Activated CD4-positive, alpha-beta T cell treated with anti-CD3 and anti-CD28 coated beads, Interleukin-2, amount 10 ng/mL, durations not matched to agents 24 days and 14 days (primary cell): ENCODE measurements at regions of chr13 and their contacts with region 1.

Region 1: DNA sequence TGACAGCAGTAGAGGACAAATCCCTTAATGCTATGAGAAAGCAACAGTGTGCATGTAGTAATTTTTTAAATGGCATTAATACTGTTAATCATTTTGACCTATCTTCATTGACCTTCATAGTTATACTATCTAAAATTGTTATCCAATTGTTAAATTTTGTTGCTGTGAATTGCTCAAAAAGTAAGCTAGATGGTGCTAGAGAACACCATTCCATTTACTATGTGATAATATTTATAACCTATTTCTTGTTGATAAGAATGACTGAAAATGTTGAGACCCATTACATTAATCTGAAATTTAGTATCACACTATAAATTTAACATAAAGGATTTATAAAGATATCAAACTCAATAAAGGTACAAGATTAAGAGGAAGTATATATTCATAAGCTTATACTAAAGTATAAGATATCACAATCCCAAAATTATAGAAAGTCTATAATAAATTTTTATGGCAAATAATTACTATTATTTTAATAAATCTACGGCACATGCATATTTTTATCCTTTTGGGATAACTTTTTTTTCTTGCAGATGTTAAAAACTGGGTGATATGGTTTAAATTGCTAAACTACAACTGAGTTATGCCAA is 1573.3 kb downstream of the PCDH9 start:
- DNase-seq: no peak
- H3K4me3 Mint-ChIP-seq: no peak overlapping the region
- H3K27ac Mint-ChIP-seq: no peak overlapping the region
- H3K4me1 Mint-ChIP-seq: no peaks in the 10 kb centered on the region
- H3K27me3 Mint-ChIP-seq: no peaks in the 10 kb centered on the region

Region 2: GRCh38 chr13:63741029-63741813 is 1915.6 kb before region 1 on chr13:
- intact Hi-C with region 1: no loop called
- DNase-seq: no peak
- H3K4me3 Mint-ChIP-seq: no peak overlapping the region
- H3K27ac Mint-ChIP-seq: no peak overlapping the region
- H3K4me1 Mint-ChIP-seq: no peaks in the 10 kb centered on the region
- H3K27me3 Mint-ChIP-seq: no peaks in the 10 kb centered on the region

Region 3: GRCh38 chr13:67238277-67238859 is 1581.5 kb after region 1 on chr13:
- intact Hi-C with region 1: loop called (anchors 5 kb)
- DNase-seq: no peak
- H3K4me3 Mint-ChIP-seq: no peak overlapping the region
- H3K27ac Mint-ChIP-seq: no peak overlapping the region
- H3K4me1 Mint-ChIP-seq: no peaks in the 10 kb centered on the region
- H3K27me3 Mint-ChIP-seq: peaks cover 9% of the 10 kb centered on the region